ENCODE measurements at regions of chr10 and their contacts with region 1.

Region 1: DNA sequence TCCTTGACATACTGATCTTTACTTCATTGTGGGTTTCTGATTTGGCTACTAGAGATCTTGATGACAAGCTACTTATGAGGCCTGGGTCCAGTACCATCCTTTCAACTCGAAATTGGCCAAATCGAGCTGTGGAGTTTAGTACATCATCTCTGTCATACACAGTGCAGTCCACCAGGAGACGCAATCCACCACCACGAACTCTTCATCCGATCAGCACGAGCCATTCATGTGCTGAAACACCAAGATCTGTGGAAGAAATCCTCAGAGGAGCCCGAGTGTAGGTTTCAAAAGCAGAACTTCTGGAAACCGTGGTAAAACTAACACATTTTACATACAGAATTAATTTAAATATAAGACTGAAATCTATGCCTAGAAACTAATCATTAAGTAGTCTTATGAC is 14.2 kb downstream of the DNAJC9 start:
- DNase-seq: no peak
- H3K4me3 Mint-ChIP-seq: no peak overlapping the region
- H3K27ac Mint-ChIP-seq: no peak overlapping the region
- H3K4me1 Mint-ChIP-seq: no peaks in the 10 kb centered on the region
- H3K27me3 Mint-ChIP-seq: no peaks in the 10 kb centered on the region

Region 2: GRCh38 chr10:71458387-71458786 is 1774.5 kb before region 1 on chr10:
- CTCF ChIA-PET with region 1: no interaction called
- POLR2A ChIA-PET with region 1: interaction called, 12 read pairs
- DNase-seq: no peak
- H3K4me3 Mint-ChIP-seq: no peak overlapping the region
- H3K27ac Mint-ChIP-seq: no peak overlapping the region
- H3K4me1 Mint-ChIP-seq: no peaks in the 10 kb centered on the region
- H3K27me3 Mint-ChIP-seq: no peaks in the 10 kb centered on the region